Mucosa of descending colon (tissue), 3 donors: ENCODE measurements at regions of chr5 and their contacts with region 1.

Region 1: GRCh38 chr5:93800988-93801811 is 59.8 kb upstream of the POU5F2 start:
- DNase-seq: peak in 1 of 3 donors; percentile 72
- ATAC-seq: peak; percentile 58
- H3K4me3 ChIP-seq: no peak overlapping the region
- H3K4me1 ChIP-seq: no peaks in the 10 kb centered on the region
- CTCF ChIP-seq: peak; percentile 8

Region 2: DNA sequence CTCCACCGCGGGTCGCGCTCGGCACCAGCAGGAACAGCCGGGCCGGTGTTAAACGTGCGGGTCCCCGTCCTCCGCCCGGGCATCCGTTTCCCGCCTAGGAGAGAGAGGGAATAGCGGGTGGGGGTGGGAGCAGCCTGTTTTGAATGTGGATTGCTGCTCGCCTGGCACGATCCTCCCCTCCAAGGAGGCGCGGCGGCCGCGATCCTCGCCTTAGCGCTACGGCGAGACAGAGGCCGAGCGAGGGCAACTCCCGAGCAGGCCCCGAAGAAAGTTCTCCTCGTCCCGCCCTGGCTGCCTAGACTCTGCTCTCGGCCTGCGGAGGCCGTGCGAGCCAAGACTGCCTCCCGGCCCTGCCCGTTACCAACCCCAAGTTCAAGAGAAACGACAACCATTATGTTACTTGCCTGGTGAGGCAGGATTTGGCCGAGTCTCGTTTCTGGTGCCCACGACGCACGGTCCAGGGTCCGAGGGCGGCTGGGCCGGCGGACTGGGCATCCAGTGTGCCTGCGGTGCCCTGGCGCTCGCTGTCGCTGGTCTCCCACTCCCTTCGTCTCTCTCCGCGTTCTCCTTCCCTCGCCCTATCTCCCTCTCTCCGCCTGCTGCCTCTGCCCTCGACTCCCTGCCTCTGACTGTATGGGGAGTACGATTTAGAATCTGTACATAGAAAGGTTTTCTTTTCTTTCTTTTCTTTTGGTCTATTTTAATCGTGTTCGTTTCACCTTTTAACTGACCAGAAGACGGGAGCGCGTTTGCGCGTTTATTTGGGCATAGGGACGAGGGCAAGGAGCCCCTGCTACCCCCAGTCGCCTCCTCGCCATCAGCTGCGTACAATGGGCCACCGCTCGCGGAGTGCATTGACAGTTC is 220.9 kb before region 1 on chr5:
- intact Hi-C with region 1: loop called in 1 of 2 experiments (anchors 2 kb)
- DNase-seq: peak in 1 of 3 donors; percentile 46
- ATAC-seq: peak; percentile 36
- H3K4me3 ChIP-seq: peak overlapping the region; percentile 14
- H3K4me1 ChIP-seq: peaks cover 31% of the 10 kb centered on the region
- CTCF ChIP-seq: no peak

Region 3: DNA sequence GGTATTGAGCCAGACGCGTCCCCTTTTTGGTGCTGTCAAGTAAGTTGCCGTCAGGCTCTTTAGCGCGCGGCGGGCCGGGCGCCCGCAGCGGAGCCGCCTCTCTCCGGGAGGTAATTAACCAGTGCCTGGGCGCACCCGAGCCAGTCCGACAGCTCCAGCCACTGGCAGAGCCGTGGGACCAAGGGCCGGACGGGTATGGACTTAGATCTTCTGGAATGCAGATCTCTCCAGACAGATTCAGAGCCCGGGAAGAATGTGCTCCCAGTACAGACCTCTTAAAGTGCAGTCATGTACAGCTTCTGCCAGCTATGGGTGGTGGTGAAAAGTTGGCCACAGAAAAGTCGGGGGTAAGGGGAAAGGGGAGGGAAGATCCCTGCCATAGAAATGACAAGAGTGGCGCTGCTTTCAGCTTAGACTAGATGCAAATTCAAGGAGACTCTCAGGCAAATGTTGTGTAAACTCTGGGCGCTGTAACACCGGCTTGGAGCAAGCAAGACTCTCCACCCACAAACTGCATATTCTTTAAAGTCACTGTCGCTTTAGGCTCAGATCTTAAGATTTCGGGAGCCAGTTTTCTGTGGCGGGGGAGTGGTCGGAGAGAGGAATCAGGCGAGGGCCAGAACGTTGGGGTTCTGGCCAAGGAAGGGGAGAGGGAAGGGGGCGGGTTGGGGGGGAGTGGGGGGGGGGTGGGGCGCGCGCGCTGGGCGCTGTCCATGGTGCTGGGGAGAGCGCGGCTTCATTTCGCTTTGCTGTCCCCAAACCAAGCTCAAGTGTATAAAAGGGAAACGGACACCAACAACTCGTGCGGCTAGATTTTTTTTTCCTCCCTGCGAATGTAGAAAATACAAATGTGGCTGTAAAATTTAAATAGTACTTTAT is 189.0 kb before region 1 on chr5:
- intact Hi-C with region 1: loop called in 1 of 2 experiments (anchors 10 kb)
- DNase-seq: peak in 2 of 3 donors; percentile 34 to 44
- ATAC-seq: peak; percentile 58
- H3K4me3 ChIP-seq: no peak overlapping the region
- H3K4me1 ChIP-seq: no peaks in the 10 kb centered on the region
- CTCF ChIP-seq: no peak

Region 4: DNA sequence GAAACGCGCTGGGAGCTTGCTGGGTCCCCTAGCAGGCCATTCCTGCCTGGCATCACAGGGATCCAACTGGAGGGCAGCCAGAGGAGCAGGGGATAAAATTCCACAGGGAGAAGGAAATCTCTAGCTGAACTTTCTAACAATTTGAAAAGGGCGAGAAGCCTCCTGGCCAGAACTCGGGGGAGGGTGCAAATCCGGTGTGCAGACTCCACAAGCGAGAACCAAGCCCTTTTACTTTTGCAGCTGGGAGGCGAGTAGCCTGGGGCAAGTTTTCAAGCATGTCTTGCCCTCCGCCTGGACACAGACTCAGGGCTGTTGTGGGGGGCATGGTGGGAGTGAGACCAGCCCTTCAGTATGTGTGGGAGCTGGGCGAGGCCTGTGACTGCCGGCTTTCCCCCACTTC is 45.5 kb before region 1 on chr5:
- intact Hi-C with region 1: no loop called
- DNase-seq: no peak
- ATAC-seq: no peak
- H3K4me3 ChIP-seq: no peak overlapping the region
- H3K4me1 ChIP-seq: no peaks in the 10 kb centered on the region
- CTCF ChIP-seq: no peak

Region 5: GRCh38 chr5:93850311-93850710 is 49.1 kb after region 1 on chr5:
- intact Hi-C with region 1: no loop called
- DNase-seq: no peak
- ATAC-seq: no peak
- H3K4me3 ChIP-seq: no peak overlapping the region
- H3K4me1 ChIP-seq: no peaks in the 10 kb centered on the region
- CTCF ChIP-seq: no peak